Activated CD4-positive, alpha-beta memory T cell treated with anti-CD3 and anti-CD28 coated beads, Interleukin-2, amount 10 ng/mL, durations not matched to agents 7 days and 5 days (primary cell): ENCODE measurements at regions of chr3 and their contacts with region 1.

Region 1: DNA sequence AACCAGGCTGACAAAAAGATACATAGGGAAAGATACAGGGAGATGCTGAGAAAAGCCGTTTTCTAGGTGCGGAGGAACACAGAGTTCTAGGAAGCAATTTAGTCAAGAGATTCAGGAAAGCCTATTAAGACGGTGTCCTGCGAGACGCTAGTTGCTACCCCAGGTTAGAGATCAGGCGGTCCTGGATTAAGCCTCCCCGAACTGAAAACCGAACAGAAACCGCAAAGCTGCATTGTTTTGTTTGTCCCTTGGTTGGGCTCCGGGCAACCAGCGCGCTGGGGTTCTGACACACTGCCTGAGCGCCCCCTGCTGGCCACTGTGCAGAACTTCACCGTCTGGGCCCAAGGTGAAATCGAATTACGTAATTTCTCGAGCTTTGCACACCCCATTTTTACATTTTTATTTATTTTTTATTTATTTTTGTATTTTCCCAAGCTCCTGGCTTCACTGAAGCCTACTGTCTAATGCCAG is 37.3 kb upstream of the NDUFB4 start:
- DNase-seq: peak; percentile 88
- H3K4me3 Mint-ChIP-seq: peak overlapping the region; percentile 74
- H3K27ac Mint-ChIP-seq: no peak overlapping the region
- H3K4me1 Mint-ChIP-seq: peaks cover 13% of the 10 kb centered on the region
- H3K27me3 Mint-ChIP-seq: peaks cover 2% of the 10 kb centered on the region

Region 2: DNA sequence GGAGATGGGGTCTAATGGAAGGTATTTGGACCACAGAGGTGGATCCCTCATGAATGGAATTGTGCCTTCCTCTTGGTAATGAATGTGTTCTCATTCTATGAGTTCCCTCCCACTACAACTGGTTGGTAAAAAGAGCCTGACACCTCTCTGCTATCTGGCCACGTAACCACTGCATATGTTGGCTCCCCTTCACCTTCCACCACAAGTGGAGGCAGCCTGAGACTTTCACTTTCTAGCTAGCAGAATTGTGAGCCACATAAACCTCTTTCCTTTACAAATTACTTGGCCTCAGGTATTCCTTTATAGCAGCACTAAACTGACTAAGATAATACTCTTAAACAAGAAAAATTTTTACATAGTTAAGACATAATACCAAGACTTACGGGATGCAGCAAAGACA is 621.6 kb before region 1 on chr3:
- CTCF ChIA-PET with region 1: no interaction called
- POLR2A ChIA-PET with region 1: no interaction called
- DNase-seq: peak; percentile 47
- H3K4me3 Mint-ChIP-seq: no peak overlapping the region
- H3K27ac Mint-ChIP-seq: no peak overlapping the region
- H3K4me1 Mint-ChIP-seq: peaks cover 17% of the 10 kb centered on the region
- H3K27me3 Mint-ChIP-seq: peaks cover 2% of the 10 kb centered on the region

Region 3: GRCh38 chr3:120245386-120245785 is 313.4 kb before region 1 on chr3:
- CTCF ChIA-PET with region 1: interaction called, 23 read pairs
- POLR2A ChIA-PET with region 1: interaction called, 4 read pairs
- DNase-seq: no peak
- H3K4me3 Mint-ChIP-seq: no peak overlapping the region
- H3K27ac Mint-ChIP-seq: no peak overlapping the region
- H3K4me1 Mint-ChIP-seq: no peaks in the 10 kb centered on the region
- H3K27me3 Mint-ChIP-seq: peaks cover 12% of the 10 kb centered on the region

Region 4: GRCh38 chr3:120263792-120264191 is 295.0 kb before region 1 on chr3:
- CTCF ChIA-PET with region 1: no interaction called
- POLR2A ChIA-PET with region 1: no interaction called
- DNase-seq: no peak
- H3K4me3 Mint-ChIP-seq: no peak overlapping the region
- H3K27ac Mint-ChIP-seq: no peak overlapping the region
- H3K4me1 Mint-ChIP-seq: no peaks in the 10 kb centered on the region
- H3K27me3 Mint-ChIP-seq: peaks cover 2% of the 10 kb centered on the region

Region 5: GRCh38 chr3:120492103-120492502 is 66.7 kb before region 1 on chr3:
- CTCF ChIA-PET with region 1: no interaction called
- POLR2A ChIA-PET with region 1: no interaction called
- DNase-seq: no peak
- H3K4me3 Mint-ChIP-seq: no peak overlapping the region
- H3K27ac Mint-ChIP-seq: no peak overlapping the region
- H3K4me1 Mint-ChIP-seq: no peaks in the 10 kb centered on the region
- H3K27me3 Mint-ChIP-seq: peaks cover 13% of the 10 kb centered on the region